Activated CD4-positive, alpha-beta T cell treated with anti-CD3 and anti-CD28 coated beads for 36 hours (primary cell): ENCODE measurements at regions of chr12 and their contacts with region 1.

Region 1: GRCh38 chr12:95003213-95003920 is at the start of gene NDUFA12:
- DNase-seq: peak; percentile 98
- ATAC-seq: peak; percentile 99
- H3K4me3 Mint-ChIP-seq: peak within 1 kb of the TSS; percentile 95
- H3K27ac Mint-ChIP-seq: peak within 1 kb of the TSS; percentile 90
- H3K4me1 Mint-ChIP-seq: peaks cover 49% of the 10 kb centered on the region
- H3K27me3 Mint-ChIP-seq: no peaks in the 10 kb centered on the region
- total RNA-seq, gene NDUFA12: 135 to 194 TPM

Region 2: DNA sequence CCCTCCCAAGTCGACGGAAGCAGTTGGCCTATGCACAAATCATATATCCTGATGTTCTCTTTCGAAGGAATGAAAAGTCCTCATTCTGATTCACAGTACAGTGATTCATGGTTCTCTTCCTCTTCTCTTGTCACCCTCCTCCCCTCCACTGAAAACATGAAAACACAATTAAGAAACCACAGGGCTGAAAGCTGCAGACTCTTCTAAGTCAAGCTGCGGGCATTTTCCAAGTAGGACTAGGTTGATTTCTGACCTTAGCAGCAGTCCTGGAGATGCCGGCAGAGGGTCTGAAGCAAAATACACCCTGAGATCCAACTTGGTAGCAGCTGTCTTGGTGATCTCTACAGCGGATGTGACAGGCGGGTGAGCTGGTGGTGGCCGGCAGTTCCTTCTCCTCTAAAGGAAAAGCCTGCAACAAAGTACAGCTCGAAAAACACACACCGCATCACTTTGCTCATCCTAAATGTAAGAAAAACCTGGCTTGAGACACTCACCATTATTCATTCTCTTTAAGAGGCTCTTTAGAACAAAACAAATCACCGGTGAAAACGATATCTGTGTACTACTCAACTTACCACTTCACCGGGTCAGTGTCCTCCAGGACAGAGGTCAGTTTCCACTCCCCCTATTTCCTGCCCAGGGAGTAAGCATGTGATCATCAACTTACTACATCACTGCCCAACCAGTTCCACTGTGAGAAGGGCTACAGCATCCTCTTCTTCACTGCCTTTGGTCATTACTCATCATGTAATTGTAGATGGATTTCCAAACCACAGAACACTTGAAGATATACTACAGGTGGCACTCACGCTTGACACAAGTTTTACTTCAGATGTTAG is 359.0 kb before region 1 on chr12:
- CTCF ChIA-PET with region 1: no interaction called
- POLR2A ChIA-PET with region 1: no interaction called
- intact Hi-C with region 1: loop called in 1 of 2 experiments (anchors 5 kb)
- DNase-seq: peak; percentile 41
- ATAC-seq: peak; percentile 61
- H3K4me3 Mint-ChIP-seq: no peak overlapping the region
- H3K27ac Mint-ChIP-seq: no peak overlapping the region
- H3K4me1 Mint-ChIP-seq: peaks cover 37% of the 10 kb centered on the region
- H3K27me3 Mint-ChIP-seq: peaks cover 48% of the 10 kb centered on the region

Region 3: DNA sequence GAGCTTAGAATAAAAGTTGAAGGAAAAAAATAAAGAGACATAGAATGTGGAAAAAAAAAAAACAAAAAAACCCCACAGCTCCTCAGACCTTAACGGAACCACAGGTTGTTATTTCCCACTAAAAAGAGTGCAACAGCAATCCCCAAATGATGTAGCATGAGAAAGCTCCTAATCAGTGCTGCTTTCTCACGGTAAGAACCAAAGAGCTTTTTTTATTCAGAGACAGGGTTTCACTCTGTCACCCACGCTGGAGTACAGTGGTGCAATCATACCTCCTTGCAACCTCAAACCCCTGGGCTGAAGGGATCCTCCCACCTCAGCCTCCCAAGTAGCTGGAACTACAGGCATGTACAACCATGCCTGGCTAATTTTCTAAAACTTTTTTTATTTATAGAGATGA is 13.1 kb before region 1 on chr12:
- CTCF ChIA-PET with region 1: interaction called, 8 read pairs
- POLR2A ChIA-PET with region 1: interaction called, 5 read pairs
- intact Hi-C with region 1: loop called in 1 of 2 experiments (anchors 1 kb)
- DNase-seq: peak; percentile 35
- ATAC-seq: peak; percentile 64
- H3K4me3 Mint-ChIP-seq: no peak overlapping the region
- H3K27ac Mint-ChIP-seq: peak overlapping the region; percentile 34
- H3K4me1 Mint-ChIP-seq: peaks cover 55% of the 10 kb centered on the region
- H3K27me3 Mint-ChIP-seq: no peaks in the 10 kb centered on the region

Region 4: GRCh38 chr12:95102916-95103671 is 99.7 kb after region 1 on chr12:
- CTCF ChIA-PET with region 1: no interaction called
- POLR2A ChIA-PET with region 1: interaction called, 3 read pairs
- intact Hi-C with region 1: loop called in 1 of 2 experiments (anchors 1 kb)
- DNase-seq: peak; percentile 68
- ATAC-seq: peak; percentile 99
- H3K4me3 Mint-ChIP-seq: no peak overlapping the region
- H3K27ac Mint-ChIP-seq: peak overlapping the region; percentile 38
- H3K4me1 Mint-ChIP-seq: peaks cover 14% of the 10 kb centered on the region
- H3K27me3 Mint-ChIP-seq: no peaks in the 10 kb centered on the region

Region 5: GRCh38 chr12:95942524-95943329 is 939.4 kb after region 1 on chr12 and contains the start of gene CCDC38:
- CTCF ChIA-PET with region 1: no interaction called
- POLR2A ChIA-PET with region 1: no interaction called
- intact Hi-C with region 1: loop called in 1 of 2 experiments (anchors 5 kb)
- DNase-seq: peak; percentile 91
- ATAC-seq: peak; percentile 98
- H3K4me3 Mint-ChIP-seq: peak within 1 kb of the TSS; percentile 84
- H3K27ac Mint-ChIP-seq: peak within 1 kb of the TSS; percentile 91
- H3K4me1 Mint-ChIP-seq: peaks cover 4% of the 10 kb centered on the region
- H3K27me3 Mint-ChIP-seq: no peaks in the 10 kb centered on the region
- total RNA-seq, gene CCDC38: 0.21 TPM in 1 of 2 experiments, not detected in the other